Mucosa of descending colon (tissue), 3 donors: ENCODE measurements at regions of chr10 and their contacts with region 1.

Region 1: GRCh38 chr10:69237528-69238159 is 17.5 kb downstream of the HKDC1 start:
- DNase-seq: peak; percentile 86 to 94 (median 93)
- ATAC-seq: peak; percentile 90
- H3K4me3 ChIP-seq: no peak overlapping the region
- H3K4me1 ChIP-seq: peaks cover 5% of the 10 kb centered on the region
- CTCF ChIP-seq: peak; percentile 65

Region 2: DNA sequence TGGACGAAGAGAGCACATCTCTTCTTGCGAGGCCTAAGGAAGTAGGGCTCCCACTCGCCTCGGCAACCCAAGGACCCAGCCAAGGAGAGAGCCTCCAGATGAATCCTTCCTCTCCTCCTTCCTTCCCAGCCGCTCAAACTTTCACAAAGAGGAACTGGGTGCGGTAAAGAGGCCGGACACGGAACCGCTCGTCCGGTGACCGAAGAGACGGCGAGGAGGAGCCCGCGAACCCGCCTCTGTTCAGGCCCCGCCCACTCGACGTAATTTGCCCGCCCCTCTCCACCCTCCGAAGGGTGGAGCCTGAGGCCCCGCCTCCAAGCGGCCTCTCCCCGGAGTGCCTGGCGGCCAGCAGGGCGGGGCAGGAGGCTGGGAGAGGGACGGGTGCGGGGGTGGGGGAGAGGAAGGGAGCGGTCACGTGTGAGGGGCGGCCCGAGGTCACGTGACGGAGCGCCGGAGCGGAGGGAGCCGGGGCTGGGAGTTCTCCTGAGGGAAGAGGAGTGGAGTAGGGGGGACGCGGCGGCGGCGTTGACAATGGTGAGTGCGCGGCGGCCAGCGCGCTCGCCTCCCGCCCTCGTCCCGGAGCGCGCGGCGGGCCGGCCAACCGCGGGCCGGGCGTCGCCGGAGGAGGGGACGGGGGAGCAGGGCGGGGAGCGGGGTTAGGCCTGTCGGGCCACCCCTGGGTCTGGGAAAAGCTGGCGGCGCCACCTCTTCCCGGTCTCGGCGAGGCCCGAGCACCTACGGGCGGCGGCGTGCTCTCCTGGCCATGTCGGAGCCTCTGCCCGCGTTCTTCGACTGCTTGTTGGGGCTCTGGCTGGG is 113.7 kb before region 1 on chr10 and contains the start of gene VPS26A:
- intact Hi-C with region 1: no loop called
- DNase-seq: peak; percentile 99 to 100 (median 100)
- ATAC-seq: peak; percentile 98
- H3K4me3 ChIP-seq: peak within 1 kb of the TSS; percentile 88
- H3K4me1 ChIP-seq: peaks cover 13% of the 10 kb centered on the region
- CTCF ChIP-seq: no peak
- total RNA-seq, gene VPS26A: 51.7 to 64.0 (median 61.7) TPM

Region 3: GRCh38 chr10:69392481-69393000 is 154.9 kb after region 1 on chr10:
- intact Hi-C with region 1: loop called (anchors 5 kb)
- DNase-seq: peak; percentile 85 to 89 (median 86)
- ATAC-seq: peak; percentile 99
- H3K4me3 ChIP-seq: no peak overlapping the region
- H3K4me1 ChIP-seq: no peaks in the 10 kb centered on the region
- CTCF ChIP-seq: peak; percentile 81

Region 4: DNA sequence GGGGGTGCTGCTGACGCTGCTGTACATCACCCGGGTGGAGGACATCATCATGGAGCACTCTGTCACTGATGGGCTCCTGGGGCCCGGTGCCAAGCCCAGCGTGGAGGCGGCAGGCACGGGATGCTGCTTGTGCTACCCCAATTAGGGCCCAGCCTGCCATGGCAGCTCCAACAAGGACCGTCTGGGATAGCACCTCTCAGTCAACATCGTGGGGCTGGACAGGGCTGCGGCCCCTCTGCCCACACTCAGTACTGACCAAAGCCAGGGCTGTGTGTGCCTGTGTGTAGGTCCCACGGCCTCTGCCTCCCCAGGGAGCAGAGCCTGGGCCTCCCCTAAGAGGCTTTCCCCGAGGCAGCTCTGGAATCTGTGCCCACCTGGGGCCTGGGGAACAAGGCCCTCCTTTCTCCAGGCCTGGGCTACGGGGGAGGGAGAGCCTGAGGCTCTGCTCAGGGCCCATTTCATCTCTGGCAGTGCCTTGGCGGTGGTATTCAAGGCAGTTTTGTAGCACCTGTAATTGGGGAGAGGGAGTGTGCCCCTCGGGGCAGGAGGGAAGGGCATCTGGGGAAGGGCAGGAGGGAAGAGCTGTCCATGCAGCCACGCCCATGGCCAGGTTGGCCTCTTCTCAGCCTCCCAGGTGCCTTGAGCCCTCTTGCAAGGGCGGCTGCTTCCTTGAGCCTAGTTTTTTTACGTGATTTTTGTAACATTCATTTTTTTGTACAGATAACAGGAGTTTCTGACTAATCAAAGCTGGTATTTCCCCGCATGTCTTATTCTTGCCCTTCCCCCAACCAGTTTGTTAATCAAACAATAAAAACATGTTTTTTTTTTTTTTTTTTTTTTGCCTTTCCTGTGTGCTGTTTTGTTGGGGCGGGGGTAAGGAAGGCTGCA is 269.4 kb after region 1 on chr10:
- intact Hi-C with region 1: loop called (anchors 5 to 10 kb)
- DNase-seq: peak in 2 of 3 donors; percentile 47 to 54
- ATAC-seq: peak; percentile 42
- H3K4me3 ChIP-seq: no peak overlapping the region
- H3K4me1 ChIP-seq: peaks cover 5% of the 10 kb centered on the region
- CTCF ChIP-seq: no peak

Region 5: GRCh38 chr10:69515699-69516259 is 278.1 kb after region 1 on chr10:
- intact Hi-C with region 1: loop called in 1 of 2 experiments (anchors 10 kb)
- DNase-seq: peak; percentile 73 to 89 (median 85)
- ATAC-seq: peak; percentile 97
- H3K4me3 ChIP-seq: no peak overlapping the region
- H3K4me1 ChIP-seq: no peaks in the 10 kb centered on the region
- CTCF ChIP-seq: peak; percentile 74

Region 6: DNA sequence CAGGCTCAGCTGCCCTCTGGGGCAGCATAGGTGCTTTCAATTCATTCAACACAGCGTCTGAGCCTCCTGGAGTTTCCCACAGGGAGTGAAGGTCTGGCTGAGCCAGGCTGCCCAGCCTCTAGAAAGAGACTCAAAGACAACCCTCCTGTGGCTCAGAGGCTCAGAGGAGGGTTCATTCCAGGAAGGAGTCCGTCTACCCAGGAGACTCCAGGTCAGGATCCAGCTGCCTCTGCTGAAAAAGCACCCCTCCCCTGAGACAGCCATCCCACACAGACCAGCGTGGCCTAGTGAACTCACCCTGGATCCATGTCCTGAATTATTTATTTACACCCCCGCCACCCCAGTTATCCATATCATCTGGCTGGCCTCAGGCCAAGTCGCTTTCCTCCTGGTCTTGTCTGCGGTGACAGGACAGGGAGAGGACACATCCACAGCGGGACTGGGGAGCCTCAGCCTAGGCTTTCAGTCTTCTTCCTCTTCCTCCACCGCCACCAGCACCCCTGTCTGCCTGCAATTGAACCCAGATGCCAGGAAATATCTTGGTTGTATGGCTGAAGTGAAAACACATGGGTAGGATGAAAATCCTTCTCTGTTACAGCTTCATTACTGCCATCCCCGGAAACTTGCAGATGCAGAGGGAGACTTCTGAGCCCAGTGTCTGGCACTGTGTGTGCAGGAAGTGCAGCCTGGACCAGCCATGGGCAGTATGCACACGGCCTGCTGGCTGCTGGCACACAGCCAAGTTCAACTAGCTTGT is 520.1 kb after region 1 on chr10:
- intact Hi-C with region 1: no loop called
- DNase-seq: no peak
- ATAC-seq: peak; percentile 22
- H3K4me3 ChIP-seq: no peak overlapping the region
- H3K4me1 ChIP-seq: no peaks in the 10 kb centered on the region
- CTCF ChIP-seq: no peak